ENCODE measurements at regions of chr15 and their contacts with region 1.

Region 1: GRCh38 chr15:96974761-96975160 is 644.3 kb downstream of the NR2F2 start:
- DNase-seq: no peak
- ATAC-seq: no peak

Region 2: DNA sequence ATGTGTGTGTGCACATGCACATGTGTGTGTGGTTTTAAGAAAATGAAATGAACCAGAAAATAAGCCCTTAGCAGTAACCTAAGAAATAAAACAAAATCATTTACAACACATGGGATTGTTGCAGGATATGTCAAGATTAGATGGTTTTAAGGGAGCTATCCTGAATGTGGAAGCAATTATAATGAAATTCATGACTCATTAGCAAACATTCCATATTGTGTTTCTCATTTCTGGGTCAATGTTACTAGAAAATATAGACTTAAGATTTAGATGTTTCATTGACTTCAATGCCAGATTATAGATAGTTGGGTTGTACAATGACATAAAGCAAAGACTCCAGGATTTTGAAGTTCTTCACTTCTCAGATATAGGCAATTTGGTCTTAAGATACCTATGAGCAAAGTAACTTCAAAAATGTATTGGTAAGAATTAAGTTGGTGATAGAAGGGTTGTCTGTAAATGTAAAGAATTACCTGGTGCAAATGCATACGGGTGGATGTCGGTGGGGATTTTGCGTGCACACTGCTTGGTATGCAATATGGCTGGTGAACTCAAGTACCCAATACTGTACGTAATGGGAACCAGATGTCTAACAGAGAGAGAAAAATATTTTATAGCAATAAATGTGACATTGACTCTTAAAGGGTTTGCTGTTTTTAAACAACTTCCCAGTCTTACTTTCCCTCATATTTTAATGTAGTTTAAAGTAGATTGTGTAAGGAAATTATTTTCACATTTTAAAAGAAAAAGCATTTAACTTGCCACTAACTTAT is 698.1 kb before region 1 on chr15:
- intact Hi-C with region 1: loop called (anchors 5 kb)
- DNase-seq: no peak
- ATAC-seq: no peak